Posterior cingulate gyrus (tissue), 11 donors: ENCODE measurements at regions of chr11 and their contacts with region 1.

Region 1: GRCh38 chr11:62560566-62561103 is 13.1 kb downstream of the EEF1G start:
- DNase-seq: peak in 6 of 10 donors; percentile 52 to 90 (median 60)

Region 2: DNA sequence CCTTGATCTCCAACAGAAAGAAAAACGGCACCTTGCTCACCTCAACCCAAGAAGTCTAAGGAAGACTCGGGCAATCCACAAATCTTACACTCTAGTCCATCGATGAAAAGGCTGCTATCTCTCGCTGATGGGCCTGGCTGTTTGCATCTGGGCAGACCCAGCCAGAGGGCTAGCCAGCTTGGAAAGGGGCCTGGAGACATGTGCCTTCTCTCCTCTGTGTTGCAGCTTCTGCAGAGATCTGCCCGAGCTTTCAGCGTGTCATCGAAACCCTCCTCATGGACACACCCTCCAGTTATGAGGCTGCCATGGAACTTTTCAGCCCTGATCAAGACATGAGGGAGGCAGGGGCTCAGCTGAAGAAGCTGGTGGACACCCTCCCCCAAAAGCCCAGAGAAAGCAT is 138.6 kb before region 1 on chr11:
- intact Hi-C with region 1: loop called (anchors 5 kb)
- DNase-seq: no peak